AG04450 (cell line): ENCODE measurements at regions of chr9 and their contacts with region 1.

Region 1: DNA sequence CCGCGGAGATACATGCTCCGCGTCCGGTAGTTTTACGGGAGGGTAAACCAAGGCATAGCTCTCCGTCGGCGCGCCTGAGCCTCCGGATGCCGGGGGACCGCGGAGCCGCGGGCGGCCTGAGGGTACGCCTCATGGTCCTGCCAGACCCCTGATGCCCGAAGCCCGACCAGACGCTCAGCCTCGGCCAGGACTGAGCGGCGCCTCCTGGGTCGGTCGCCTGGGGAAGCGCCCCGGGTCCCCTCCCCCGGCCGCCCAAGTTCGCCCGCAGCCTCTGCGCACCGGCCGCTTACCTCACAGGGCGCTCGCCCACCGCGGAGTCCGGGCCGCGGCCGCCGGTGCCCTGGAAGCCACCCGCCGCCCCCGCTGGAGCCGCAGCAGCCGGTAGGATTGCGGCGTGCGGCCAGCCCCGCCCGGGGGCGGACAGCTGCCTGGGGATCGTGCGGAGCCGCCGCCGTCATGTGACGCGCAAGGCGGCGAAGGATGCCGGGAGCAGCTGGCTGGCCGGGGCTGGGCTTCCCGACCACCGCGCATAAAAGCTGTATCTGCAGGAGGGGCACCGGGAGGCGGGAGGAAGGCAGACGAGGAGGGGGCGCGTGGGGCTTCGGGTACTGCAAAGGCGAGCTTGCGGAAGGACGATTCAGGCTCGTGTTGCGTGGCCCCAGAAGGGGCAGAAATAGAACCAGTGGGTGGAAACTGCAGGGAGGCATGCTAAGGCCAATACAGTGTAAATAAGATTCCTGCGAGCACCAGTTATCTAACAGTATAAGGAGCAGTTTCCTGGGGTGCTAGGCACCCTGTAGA is at the start of gene FBXO10:
- DNase-seq: no peak
- H3K4me3 ChIP-seq: peak within 1 kb of the TSS; percentile 84
- H3K27ac ChIP-seq: peak within 1 kb of the TSS; percentile 74
- H3K27me3 ChIP-seq: no peaks in the 10 kb centered on the region
- CTCF ChIP-seq: no peak
- polyA plus RNA-seq, gene FBXO10: 9.7 and 10.7 TPM in 2 replicates

Region 2: GRCh38 chr9:37390759-37391158 is 185.4 kb before region 1 on chr9:
- CTCF ChIA-PET with region 1: no interaction called
- POLR2A ChIA-PET with region 1: no interaction called
- DNase-seq: no peak
- H3K4me3 ChIP-seq: no peak overlapping the region
- H3K27ac ChIP-seq: no peak overlapping the region
- H3K27me3 ChIP-seq: peaks cover 11% of the 10 kb centered on the region
- CTCF ChIP-seq: 0 out of 2 replicates have a peak, but pooled peaks have one; percentile 18

Region 3: DNA sequence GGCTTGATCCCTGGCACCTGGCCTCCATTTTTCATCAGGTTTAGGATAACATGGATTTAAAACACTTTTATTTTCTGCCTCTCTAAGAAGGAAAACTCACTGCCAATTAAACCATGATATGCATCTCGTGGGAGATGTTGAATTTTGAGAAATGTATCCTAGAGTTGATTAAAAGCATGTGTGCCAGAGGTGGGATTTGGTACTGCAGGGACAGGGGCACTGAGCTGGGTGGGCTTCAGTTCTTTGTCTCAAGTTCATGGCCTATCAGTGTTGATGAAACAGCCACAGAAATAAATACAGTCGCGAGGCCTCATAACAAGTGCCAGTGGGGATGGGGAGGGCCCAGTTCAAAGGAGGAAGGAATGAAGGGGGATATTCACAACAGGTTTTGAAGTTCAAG is 55.5 kb before region 1 on chr9:
- CTCF ChIA-PET with region 1: no interaction called
- POLR2A ChIA-PET with region 1: no interaction called
- DNase-seq: no peak
- H3K4me3 ChIP-seq: no peak overlapping the region
- H3K27ac ChIP-seq: no peak overlapping the region
- H3K27me3 ChIP-seq: no peaks in the 10 kb centered on the region
- CTCF ChIP-seq: 0 out of 2 replicates have a peak, but pooled peaks have one; percentile 7

Region 4: DNA sequence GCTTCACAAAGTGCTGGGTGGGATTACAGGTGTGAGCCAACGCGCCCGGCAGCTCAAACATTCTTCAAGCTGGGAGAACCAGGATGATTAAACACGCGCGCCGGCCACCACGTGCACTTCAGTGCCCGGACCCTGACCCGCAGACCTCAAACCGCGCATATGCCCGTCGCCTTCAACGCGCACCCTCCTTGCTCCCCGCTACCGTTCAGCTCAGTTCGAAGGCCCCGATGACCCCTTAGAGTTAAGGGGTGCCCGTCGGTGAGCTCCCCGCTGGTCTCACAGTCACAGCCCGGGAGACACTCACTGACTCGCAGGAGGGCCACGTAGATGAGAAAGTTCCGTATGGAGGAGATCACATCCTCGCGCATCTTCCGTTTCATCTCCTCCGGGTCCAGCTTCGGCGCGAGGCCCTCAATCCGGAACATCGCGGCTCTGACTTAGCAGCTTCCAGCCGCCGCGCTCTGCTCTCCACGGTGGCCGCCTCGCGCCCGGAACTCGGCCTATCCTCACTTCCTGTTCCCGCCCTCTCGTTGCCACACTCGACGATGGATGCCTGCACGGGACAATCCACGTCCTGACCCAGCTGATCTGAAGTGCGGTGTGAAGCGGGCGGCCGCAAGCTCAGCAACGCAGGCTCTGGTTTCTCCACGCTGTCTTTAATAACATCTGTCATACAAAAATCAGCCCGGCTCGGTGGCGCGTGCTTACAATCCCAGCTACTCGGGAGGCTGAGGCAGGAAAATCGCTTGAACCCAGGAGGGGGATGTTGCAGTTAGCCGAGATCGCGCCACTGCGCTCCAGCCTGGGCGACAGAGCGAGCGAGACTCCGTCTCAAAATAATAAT is 16.2 kb after region 1 on chr9 and contains the start of gene TOMM5:
- CTCF ChIA-PET with region 1: interaction called, 10 read pairs
- POLR2A ChIA-PET with region 1: interaction called, 21 read pairs
- DNase-seq: peak; percentile 84
- H3K4me3 ChIP-seq: peak within 1 kb of the TSS; percentile 99
- H3K27ac ChIP-seq: peak within 1 kb of the TSS; percentile 86
- H3K27me3 ChIP-seq: peaks cover 7% of the 10 kb centered on the region
- CTCF ChIP-seq: no peak
- polyA plus RNA-seq, gene TOMM5: 185 and 207 TPM in 2 replicates